ENCODE measurements at regions of chr2 and their contacts with region 1.

Region 1: GRCh38 chr2:173027181-173028128 is 48.2 kb upstream of the MAP3K20 start:
- DNase-seq: peak; percentile 89 to 95
- H3K4me3 ChIP-seq: no peak overlapping the region
- H3K27ac ChIP-seq: peak overlapping the region in 4 of 5 donors; percentile 29 to 79 (median 47)
- H3K4me1 ChIP-seq: peaks cover 0 to 24% (median 19%) of the 10 kb centered on the region in 4 donors
- H3K27me3 ChIP-seq: no peaks in the 10 kb centered on the region
- CTCF ChIP-seq: peak in 5 of 7 experiments; percentile 80 to 95 (median 91)
- EP300 ChIP-seq: no peak
- POLR2A ChIP-seq: no peak

Region 2: GRCh38 chr2:172623249-172623965 is 404.0 kb before region 1 on chr2:
- intact Hi-C with region 1: no loop called
- DNase-seq: peak in 1 of 2 donors; percentile 26
- H3K4me3 ChIP-seq: no peak overlapping the region
- H3K27ac ChIP-seq: no peak overlapping the region
- H3K4me1 ChIP-seq: no peaks in the 10 kb centered on the region
- H3K27me3 ChIP-seq: no peaks in the 10 kb centered on the region
- CTCF ChIP-seq: no peak
- EP300 ChIP-seq: no peak
- POLR2A ChIP-seq: no peak

Region 3: GRCh38 chr2:173210270-173211196 is 183.1 kb after region 1 on chr2:
- intact Hi-C with region 1: loop called (anchors 5 kb)
- DNase-seq: peak; percentile 61 to 93
- H3K4me3 ChIP-seq: no peak overlapping the region
- H3K27ac ChIP-seq: peak overlapping the region in 4 of 5 donors; percentile 20 to 78 (median 55)
- H3K4me1 ChIP-seq: peaks cover 0 to 50% (median 25%) of the 10 kb centered on the region in 4 donors
- H3K27me3 ChIP-seq: no peaks in the 10 kb centered on the region
- CTCF ChIP-seq: peak in 6 of 7 experiments; percentile 8 to 91 (median 84)
- EP300 ChIP-seq: no peak
- POLR2A ChIP-seq: no peak